CD4-positive, alpha-beta T cell (primary cell): ENCODE measurements at regions of chr1 and their contacts with region 1.

Region 1: DNA sequence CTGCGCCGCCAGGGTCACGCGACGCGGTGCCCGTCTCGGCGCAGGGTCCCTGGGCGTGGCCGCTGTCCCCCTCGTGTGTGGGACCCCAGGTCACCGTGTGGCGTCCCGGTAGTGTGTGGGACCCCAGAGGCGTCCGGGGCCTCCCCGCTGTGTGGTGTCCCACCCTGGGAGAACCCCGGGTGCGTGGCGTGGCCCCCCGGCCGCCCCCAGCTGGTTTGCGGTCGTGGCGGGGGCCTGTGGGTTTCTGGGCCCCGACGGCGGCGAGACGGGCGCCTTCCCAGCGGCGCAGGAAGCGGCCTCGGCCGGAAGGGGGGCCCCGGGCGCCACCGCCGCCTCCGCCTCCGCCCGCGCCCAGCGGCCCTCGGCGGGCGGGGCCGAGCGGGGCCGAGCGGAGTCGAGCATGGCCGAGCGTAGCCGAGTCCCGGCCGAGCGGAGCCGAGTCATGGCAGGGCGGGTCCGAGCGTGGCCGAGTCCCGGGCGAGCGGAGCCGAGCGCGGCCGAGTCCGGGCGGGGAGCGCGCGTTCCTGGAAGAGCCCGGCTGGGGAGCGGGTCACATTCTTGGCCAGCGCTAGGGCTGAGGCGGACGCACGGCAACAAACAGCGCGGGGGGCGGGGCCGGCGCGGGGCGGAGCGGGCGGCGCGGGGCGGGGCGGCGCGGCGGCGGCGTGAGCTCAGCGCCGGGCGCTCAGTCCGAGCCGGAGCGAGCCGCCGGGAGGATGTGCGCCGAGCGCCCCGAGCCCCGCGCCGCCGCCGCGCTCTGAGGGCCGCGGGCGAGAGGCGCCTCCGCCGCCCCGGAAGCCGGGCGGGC is 569 bp upstream of the SKI start:
- DNase-seq: peak; percentile 86 to 98 (median 94)
- ATAC-seq: peak; percentile 70
- H3K4me3 ChIP-seq: peak overlapping the region; percentile 26
- H3K4me3 Mint-ChIP-seq: peak overlapping the region; percentile 88
- H3K27ac ChIP-seq: peak overlapping the region in 1 of 2 donors; percentile 46
- H3K27ac Mint-ChIP-seq: peak overlapping the region; percentile 82
- H3K4me1 ChIP-seq: peaks cover 50% of the 10 kb centered on the region
- H3K4me1 Mint-ChIP-seq: peaks cover 23% of the 10 kb centered on the region
- H3K27me3 ChIP-seq: no peaks in the 10 kb centered on the region
- H3K27me3 Mint-ChIP-seq: peaks cover 16% of the 10 kb centered on the region
- CTCF ChIP-seq: no peak

Region 2: GRCh38 chr1:2067393-2067792 is 160.2 kb before region 1 on chr1:
- CTCF ChIA-PET with region 1: no interaction called
- POLR2A ChIA-PET with region 1: no interaction called
- intact Hi-C with region 1: no loop called
- DNase-seq: no peak
- ATAC-seq: no peak
- H3K4me3 ChIP-seq: no peak overlapping the region
- H3K4me3 Mint-ChIP-seq: no peak overlapping the region
- H3K27ac ChIP-seq: no peak overlapping the region
- H3K27ac Mint-ChIP-seq: no peak overlapping the region
- H3K4me1 ChIP-seq: peaks cover 6% of the 10 kb centered on the region
- H3K4me1 Mint-ChIP-seq: peaks cover 7% of the 10 kb centered on the region
- H3K27me3 ChIP-seq: no peaks in the 10 kb centered on the region
- H3K27me3 Mint-ChIP-seq: no peaks in the 10 kb centered on the region
- CTCF ChIP-seq: no peak

Region 3: GRCh38 chr1:2205191-2205952 is 22.2 kb before region 1 on chr1:
- CTCF ChIA-PET with region 1: no interaction called
- POLR2A ChIA-PET with region 1: interaction called, 16 read pairs
- intact Hi-C with region 1: loop called in 1 of 2 experiments (anchors 1 kb)
- DNase-seq: peak; percentile 91 to 97 (median 96)
- ATAC-seq: peak; percentile 92
- H3K4me3 ChIP-seq: peak overlapping the region; percentile 42
- H3K4me3 Mint-ChIP-seq: peak overlapping the region; percentile 68
- H3K27ac ChIP-seq: peak overlapping the region in 1 of 2 donors; percentile 35
- H3K27ac Mint-ChIP-seq: no peak overlapping the region
- H3K4me1 ChIP-seq: peaks cover 28% of the 10 kb centered on the region
- H3K4me1 Mint-ChIP-seq: peaks cover 5% of the 10 kb centered on the region
- H3K27me3 ChIP-seq: no peaks in the 10 kb centered on the region
- H3K27me3 Mint-ChIP-seq: no peaks in the 10 kb centered on the region
- CTCF ChIP-seq: no peak

Region 4: GRCh38 chr1:2290595-2291510 is 63.3 kb after region 1 on chr1:
- CTCF ChIA-PET with region 1: no interaction called
- POLR2A ChIA-PET with region 1: interaction called, 11 read pairs
- intact Hi-C with region 1: no loop called
- DNase-seq: peak; percentile 52 to 91 (median 76)
- ATAC-seq: peak; percentile 64
- H3K4me3 ChIP-seq: peak overlapping the region; percentile 51
- H3K4me3 Mint-ChIP-seq: peak overlapping the region; percentile 93
- H3K27ac ChIP-seq: peak overlapping the region; percentile 60 to 66
- H3K27ac Mint-ChIP-seq: peak overlapping the region; percentile 99
- H3K4me1 ChIP-seq: peaks cover 97% of the 10 kb centered on the region
- H3K4me1 Mint-ChIP-seq: peaks cover 87% of the 10 kb centered on the region
- H3K27me3 ChIP-seq: no peaks in the 10 kb centered on the region
- H3K27me3 Mint-ChIP-seq: no peaks in the 10 kb centered on the region
- CTCF ChIP-seq: no peak

Region 5: GRCh38 chr1:2300851-2301606 is 73.5 kb after region 1 on chr1:
- CTCF ChIA-PET with region 1: no interaction called
- POLR2A ChIA-PET with region 1: interaction called, 116 read pairs
- intact Hi-C with region 1: loop called (anchors 2 kb)
- DNase-seq: peak; percentile 86 to 99 (median 93)
- ATAC-seq: peak; percentile 76
- H3K4me3 ChIP-seq: peak overlapping the region; percentile 61
- H3K4me3 Mint-ChIP-seq: peak overlapping the region; percentile 91
- H3K27ac ChIP-seq: peak overlapping the region; percentile 97 to 98
- H3K27ac Mint-ChIP-seq: peak overlapping the region; percentile 99
- H3K4me1 ChIP-seq: peaks cover 72% of the 10 kb centered on the region
- H3K4me1 Mint-ChIP-seq: peaks cover 49% of the 10 kb centered on the region
- H3K27me3 ChIP-seq: no peaks in the 10 kb centered on the region
- H3K27me3 Mint-ChIP-seq: no peaks in the 10 kb centered on the region
- CTCF ChIP-seq: no peak

Region 6: DNA sequence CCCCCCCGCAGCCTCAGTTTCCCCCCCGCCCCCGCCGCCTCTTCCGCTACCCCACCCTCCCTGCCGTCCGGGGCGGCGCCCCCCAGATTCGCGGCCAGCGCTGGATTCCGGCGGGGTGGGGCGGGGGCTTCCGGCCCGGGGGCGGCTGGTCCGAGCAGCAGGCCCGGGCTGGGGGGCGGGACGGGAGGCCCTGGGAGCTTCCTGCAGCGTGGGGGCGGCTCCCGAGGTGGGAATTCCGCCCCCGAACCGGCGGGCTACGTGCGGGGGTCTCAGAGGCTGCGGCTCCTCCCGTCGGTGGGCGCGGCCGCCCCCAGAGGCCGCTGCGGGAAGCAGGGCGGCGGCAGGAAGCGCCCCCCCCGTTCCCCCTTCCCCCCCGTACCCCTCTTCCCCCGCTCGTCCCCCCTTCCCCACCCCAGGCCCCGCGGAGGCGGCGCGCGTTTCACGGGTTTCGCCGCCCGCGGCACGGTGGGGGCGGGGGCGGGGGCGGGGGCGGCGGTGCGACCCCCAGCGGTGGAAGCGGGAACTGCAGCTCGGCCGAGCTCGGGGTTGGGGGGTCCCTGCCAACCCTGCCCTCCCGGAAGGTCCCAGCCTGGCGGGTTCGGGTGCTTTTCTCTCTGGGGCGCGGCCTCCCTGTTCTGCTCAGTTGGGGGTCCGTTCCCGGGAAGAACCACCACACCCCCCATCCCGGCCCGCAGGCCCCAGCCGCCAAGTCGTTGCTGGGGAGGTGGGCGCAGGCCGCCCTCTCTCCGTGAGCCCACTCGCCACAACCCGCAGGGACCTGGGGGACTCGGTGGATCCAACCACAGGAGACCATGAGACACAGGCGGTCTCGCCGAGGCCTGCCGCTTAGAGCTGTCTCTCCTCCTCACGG is 87.5 kb after region 1 on chr1:
- CTCF ChIA-PET with region 1: interaction called, 8 read pairs
- POLR2A ChIA-PET with region 1: interaction called, 12 read pairs
- intact Hi-C with region 1: loop called in 1 of 2 experiments (anchors 5 kb)
- DNase-seq: peak; percentile 41 to 86 (median 66)
- ATAC-seq: peak; percentile 45
- H3K4me3 ChIP-seq: peak overlapping the region; percentile 56
- H3K4me3 Mint-ChIP-seq: peak overlapping the region; percentile 83
- H3K27ac ChIP-seq: peak overlapping the region; percentile 47 to 61
- H3K27ac Mint-ChIP-seq: peak overlapping the region; percentile 81
- H3K4me1 ChIP-seq: peaks cover 61% of the 10 kb centered on the region
- H3K4me1 Mint-ChIP-seq: peaks cover 19% of the 10 kb centered on the region
- H3K27me3 ChIP-seq: no peaks in the 10 kb centered on the region
- H3K27me3 Mint-ChIP-seq: no peaks in the 10 kb centered on the region
- CTCF ChIP-seq: peak; percentile 96

Region 7: DNA sequence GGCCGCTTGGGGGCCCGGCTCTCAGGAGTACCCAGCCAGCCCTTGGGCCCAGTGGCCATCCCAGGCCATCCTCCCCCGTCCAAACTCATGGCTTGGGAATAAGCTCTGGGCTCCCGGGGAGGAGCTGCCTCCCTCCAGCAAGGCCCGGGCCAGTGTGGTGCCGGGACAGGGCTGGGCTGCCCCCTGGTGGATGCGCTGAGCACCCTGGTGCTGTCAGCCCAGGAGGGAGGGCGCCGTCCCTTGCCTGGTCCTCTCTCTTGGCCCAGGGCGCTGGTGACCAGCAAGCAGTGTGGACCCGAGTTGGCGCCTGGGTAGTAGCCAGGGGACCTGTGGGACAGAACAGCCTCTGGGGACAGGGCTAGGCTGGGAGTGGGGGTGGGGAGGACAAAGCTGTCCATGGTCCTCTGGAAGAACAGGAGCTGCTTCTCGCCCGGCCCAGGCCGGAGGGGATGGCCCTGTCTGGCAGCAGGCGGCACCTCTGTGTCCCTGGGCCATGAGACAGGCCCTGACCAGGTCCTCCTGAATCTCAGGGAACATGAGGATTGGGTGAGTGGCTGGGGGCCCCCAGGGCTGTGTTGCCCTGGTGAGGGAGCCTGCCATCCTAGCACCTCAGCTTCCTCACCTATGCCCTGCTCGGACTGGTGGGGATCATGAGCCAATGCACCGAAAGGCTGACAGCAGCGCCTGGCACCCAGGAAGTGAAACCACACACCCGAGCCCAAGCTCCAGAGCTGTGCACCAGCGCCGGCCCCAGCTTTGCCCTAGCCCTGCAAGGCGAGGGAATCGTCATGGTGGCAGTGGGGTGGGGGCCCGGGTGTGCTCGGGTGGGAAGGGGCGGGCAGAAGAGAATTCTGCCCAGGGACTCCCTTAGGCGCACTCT is 154.4 kb after region 1 on chr1:
- CTCF ChIA-PET with region 1: interaction called, 11 read pairs
- POLR2A ChIA-PET with region 1: no interaction called
- intact Hi-C with region 1: no loop called
- DNase-seq: peak; percentile 63 to 86 (median 74)
- ATAC-seq: peak; percentile 95
- H3K4me3 ChIP-seq: no peak overlapping the region
- H3K4me3 Mint-ChIP-seq: no peak overlapping the region
- H3K27ac ChIP-seq: no peak overlapping the region
- H3K27ac Mint-ChIP-seq: no peak overlapping the region
- H3K4me1 ChIP-seq: peaks cover 13% of the 10 kb centered on the region
- H3K4me1 Mint-ChIP-seq: no peaks in the 10 kb centered on the region
- H3K27me3 ChIP-seq: no peaks in the 10 kb centered on the region
- H3K27me3 Mint-ChIP-seq: no peaks in the 10 kb centered on the region
- CTCF ChIP-seq: peak; percentile 87